ENCODE measurements at regions of chr14 and their contacts with region 1.

Region 1: GRCh38 chr14:39266871-39267591 is 33.3 kb downstream of the MIA2 start:
- DNase-seq: peak; percentile 68
- H3K4me3 ChIP-seq: peak overlapping the region; percentile 62 to 81
- H3K27ac ChIP-seq: peak overlapping the region; percentile 94 to 95
- H3K4me1 ChIP-seq: peaks cover 2% of the 10 kb centered on the region
- H3K27me3 ChIP-seq: no peaks in the 10 kb centered on the region
- CTCF ChIP-seq: peak in 1 of 4 experiments; percentile 3
- POLR2A ChIP-seq: peak; percentile 47

Region 2: DNA sequence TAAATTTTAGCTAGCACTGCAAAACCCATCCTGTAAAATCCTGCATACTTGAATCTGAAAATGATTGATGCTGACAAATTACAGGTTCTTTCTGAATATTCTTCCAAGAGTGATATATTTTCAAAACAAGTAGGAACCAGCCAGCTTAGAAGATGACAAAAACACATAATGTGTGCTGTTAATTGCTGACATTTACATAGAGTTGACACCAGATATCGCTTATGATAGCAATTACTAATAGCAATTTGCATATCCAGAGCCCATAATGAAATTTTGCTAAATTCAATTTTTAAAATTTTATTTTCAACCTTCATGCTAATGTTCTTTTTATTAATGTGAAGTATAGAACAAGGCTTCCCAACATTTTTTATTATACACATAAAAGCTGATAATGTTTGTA is 448.5 kb before region 1 on chr14:
- intact Hi-C with region 1: no loop called
- DNase-seq: no peak
- H3K4me3 ChIP-seq: no peak overlapping the region
- H3K27ac ChIP-seq: no peak overlapping the region
- H3K4me1 ChIP-seq: no peaks in the 10 kb centered on the region
- H3K27me3 ChIP-seq: no peaks in the 10 kb centered on the region
- CTCF ChIP-seq: no peak
- POLR2A ChIP-seq: no peak

Region 3: GRCh38 chr14:39174560-39175444 is 92.2 kb before region 1 on chr14 and contains the start of gene PNN:
- intact Hi-C with region 1: loop called (anchors 2 kb)
- DNase-seq: peak; percentile 98
- H3K4me3 ChIP-seq: peak within 1 kb of the TSS; percentile 76 to 83
- H3K27ac ChIP-seq: peak within 1 kb of the TSS; percentile 88 to 93
- H3K4me1 ChIP-seq: no peaks in the 10 kb centered on the region
- H3K27me3 ChIP-seq: no peaks in the 10 kb centered on the region
- CTCF ChIP-seq: peak in 3 of 4 experiments; percentile 4 to 32 (median 22)
- POLR2A ChIP-seq: peak; percentile 92
- total RNA-seq, gene PNN: 29.8 to 32.7 TPM

Region 4: GRCh38 chr14:39432179-39432618 is 165.2 kb after region 1 on chr14 and contains the start of gene FBXO33:
- intact Hi-C with region 1: loop called (anchors 5 kb)
- DNase-seq: peak; percentile 97
- H3K4me3 ChIP-seq: peak within 1 kb of the TSS; percentile 88 to 96
- H3K27ac ChIP-seq: peak within 1 kb of the TSS; percentile 98 to 99
- H3K4me1 ChIP-seq: no peaks in the 10 kb centered on the region
- H3K27me3 ChIP-seq: no peaks in the 10 kb centered on the region
- CTCF ChIP-seq: peak in 1 of 4 experiments; percentile 6
- POLR2A ChIP-seq: no peak
- total RNA-seq, gene FBXO33: 15.1 to 17.1 TPM

Region 5: DNA sequence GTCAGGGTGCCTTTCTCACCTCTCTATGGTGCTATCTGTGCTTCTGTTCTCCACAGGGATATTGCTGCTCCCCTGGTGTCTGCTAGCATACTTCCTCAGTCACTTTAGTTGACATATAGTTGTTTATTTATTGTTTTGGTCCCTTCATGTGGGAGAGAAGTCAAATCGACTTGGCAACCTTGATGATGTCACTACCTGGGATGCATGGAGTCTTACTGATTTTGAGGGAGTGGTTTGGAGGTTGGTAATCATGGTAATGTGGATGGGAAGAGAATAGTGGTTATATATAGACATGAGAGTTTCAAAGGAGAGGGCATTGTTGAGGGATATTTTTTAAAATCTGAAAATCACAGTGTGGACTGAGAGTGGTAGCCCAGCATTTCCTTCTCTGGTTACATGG is 238.8 kb after region 1 on chr14:
- intact Hi-C with region 1: no loop called
- DNase-seq: no peak
- H3K4me3 ChIP-seq: no peak overlapping the region
- H3K27ac ChIP-seq: no peak overlapping the region
- H3K4me1 ChIP-seq: no peaks in the 10 kb centered on the region
- H3K27me3 ChIP-seq: no peaks in the 10 kb centered on the region
- CTCF ChIP-seq: no peak
- POLR2A ChIP-seq: no peak

Measured in prostate gland (tissue), 2 donors.